Right cardiac atrium (tissue), 5 donors: ENCODE measurements at regions of chr18 and their contacts with region 1.

Region 1: DNA sequence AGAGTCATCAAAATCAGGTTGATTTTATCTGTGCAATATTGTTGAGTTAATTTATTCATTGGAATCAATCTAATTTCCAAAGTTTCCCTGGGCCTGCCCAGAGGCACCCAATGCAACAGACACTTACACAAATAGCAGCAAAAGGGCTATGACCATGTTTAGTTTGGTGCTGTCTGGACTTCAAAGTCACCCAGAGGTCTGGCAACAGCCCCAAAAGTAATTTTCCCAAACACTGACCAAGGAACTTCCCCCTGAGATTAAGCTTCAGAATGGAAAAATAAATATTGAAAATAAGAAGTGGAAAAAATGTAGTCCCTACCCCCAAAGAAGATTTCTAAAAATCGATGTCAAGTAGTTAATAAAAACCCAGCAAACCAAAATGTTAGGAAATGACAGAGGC is 70.9 kb upstream of the RNF152 start:
- DNase-seq: no peak
- ATAC-seq: no peak
- H3K4me3 ChIP-seq: no peak overlapping the region
- H3K27ac ChIP-seq: no peak overlapping the region
- H3K4me1 ChIP-seq: no peaks in the 10 kb centered on the region
- H3K27me3 ChIP-seq: no peaks in the 10 kb centered on the region

Region 2: GRCh38 chr18:61901323-61901986 is 62.2 kb before region 1 on chr18:
- intact Hi-C with region 1: loop called in 1 of 4 experiments (anchors 10 kb)
- DNase-seq: peak in 1 of 3 donors; percentile 52
- ATAC-seq: peak; percentile 77 to 84
- H3K4me3 ChIP-seq: no peak overlapping the region
- H3K27ac ChIP-seq: no peak overlapping the region
- H3K4me1 ChIP-seq: no peaks in the 10 kb centered on the region
- H3K27me3 ChIP-seq: no peaks in the 10 kb centered on the region